HCT116 (cell line): ENCODE measurements at regions of chr10 and their contacts with region 1.

Region 1: GRCh38 chr10:14954001-14954770 is at the start of gene DCLRE1C:
- DNase-seq: peak; percentile 80
- ATAC-seq: peak; percentile 93
- H3K4me3 ChIP-seq: peak within 1 kb of the TSS; percentile 76 to 82
- H3K27ac ChIP-seq: peak within 1 kb of the TSS; percentile 70
- H3K4me1 ChIP-seq: peaks cover 13 to 23% of the 10 kb centered on the region in 2 experiments
- H3K27me3 ChIP-seq: no peaks in the 10 kb centered on the region
- CTCF ChIP-seq: no peak
- POLR2A ChIP-seq: peak; percentile 86
- RAD21 ChIP-seq: no peak
- total RNA-seq, gene DCLRE1C: 14.5 TPM

Region 2: DNA sequence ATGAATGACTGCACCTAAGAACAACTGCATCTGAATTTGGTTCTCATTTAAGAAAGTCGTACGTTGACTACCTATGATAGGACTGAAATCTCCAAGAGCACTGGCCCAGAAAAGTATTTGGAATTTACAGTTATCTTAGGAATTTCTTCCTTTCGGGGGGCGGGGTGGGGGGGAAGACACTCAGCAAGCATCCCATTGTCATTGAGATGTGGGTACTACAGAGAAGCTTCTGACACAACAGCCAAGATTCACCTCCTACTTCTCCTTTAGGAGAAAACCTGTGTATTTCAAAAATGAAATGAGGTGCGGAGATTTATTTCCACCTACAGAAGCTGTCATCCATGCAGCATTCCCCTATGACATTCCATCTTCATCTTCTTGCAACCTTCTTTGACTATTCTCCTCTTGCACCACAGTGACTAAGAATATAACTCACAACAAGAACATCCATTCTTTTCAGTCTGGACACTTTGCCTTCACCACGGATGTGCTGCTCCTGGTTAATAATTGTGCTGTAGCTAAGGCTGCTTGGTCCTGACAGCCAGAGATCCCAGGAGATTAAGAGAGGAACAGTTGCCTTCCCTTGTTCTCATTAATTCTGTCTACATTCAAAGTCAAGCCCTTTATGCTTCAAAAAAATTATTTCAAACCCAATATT is 525.0 kb before region 1 on chr10:
- CTCF ChIA-PET with region 1: no interaction called
- POLR2A ChIA-PET with region 1: no interaction called
- RAD21 ChIA-PET with region 1: no interaction called
- intact Hi-C with region 1: no loop called
- DNase-seq: no peak
- ATAC-seq: no peak
- H3K4me3 ChIP-seq: no peak overlapping the region
- H3K27ac ChIP-seq: no peak overlapping the region
- H3K4me1 ChIP-seq: no peaks in the 10 kb centered on the region
- H3K27me3 ChIP-seq: no peaks in the 10 kb centered on the region; the same call in 1 of the 2 replicates
- CTCF ChIP-seq: no peak
- POLR2A ChIP-seq: no peak
- RAD21 ChIP-seq: no peak

Region 3: GRCh38 chr10:14837757-14838581 is 116.2 kb before region 1 on chr10 and contains the starts of genes CDNF, HSPA14 and MSANTD7:
- CTCF ChIA-PET with region 1: interaction called, 3 read pairs
- POLR2A ChIA-PET with region 1: interaction called, 6 read pairs
- RAD21 ChIA-PET with region 1: no interaction called
- intact Hi-C with region 1: loop called (anchors 5 kb)
- DNase-seq: peak; percentile 98
- ATAC-seq: peak; percentile 94
- H3K4me3 ChIP-seq: peak within 1 kb of the TSS; percentile 84 to 93
- H3K27ac ChIP-seq: peak within 1 kb of the TSS; percentile 83
- H3K4me1 ChIP-seq: peaks cover 2 to 20% of the 10 kb centered on the region in 2 experiments; a peak in 3 of 4 replicates
- H3K27me3 ChIP-seq: no peaks in the 10 kb centered on the region
- CTCF ChIP-seq: no peak
- POLR2A ChIP-seq: peak; percentile 75
- RAD21 ChIP-seq: no peak
- total RNA-seq, gene CDNF: 1.1 TPM
- total RNA-seq, gene HSPA14: 19.9 TPM
- total RNA-seq, gene MSANTD7: 14.3 TPM

Region 4: GRCh38 chr10:14878266-14879054 is 75.7 kb before region 1 on chr10 and contains the start of gene SUV39H2:
- CTCF ChIA-PET with region 1: no interaction called
- POLR2A ChIA-PET with region 1: interaction called, 4 read pairs
- RAD21 ChIA-PET with region 1: no interaction called
- intact Hi-C with region 1: loop called (anchors 2 kb)
- DNase-seq: peak; percentile 80
- ATAC-seq: peak; percentile 88
- H3K4me3 ChIP-seq: peak within 1 kb of the TSS; percentile 76 to 88
- H3K27ac ChIP-seq: peak within 1 kb of the TSS; percentile 97
- H3K4me1 ChIP-seq: peaks cover 9 to 19% of the 10 kb centered on the region in 2 experiments
- H3K27me3 ChIP-seq: no peaks in the 10 kb centered on the region
- CTCF ChIP-seq: no peak
- POLR2A ChIP-seq: peak; percentile 79
- RAD21 ChIP-seq: no peak
- total RNA-seq, gene SUV39H2: 26.6 TPM

Region 5: GRCh38 chr10:15168781-15169554 is 214.8 kb after region 1 on chr10:
- CTCF ChIA-PET with region 1: no interaction called
- POLR2A ChIA-PET with region 1: no interaction called
- RAD21 ChIA-PET with region 1: no interaction called
- intact Hi-C with region 1: loop called (anchors 5 kb)
- DNase-seq: peak; percentile 92
- ATAC-seq: peak; percentile 69
- H3K4me3 ChIP-seq: peak overlapping the region; percentile 4 to 34; a peak in 1 of 4 replicates
- H3K27ac ChIP-seq: no peak overlapping the region; the same call in 1 of the 2 replicates
- H3K4me1 ChIP-seq: peaks cover 18 to 22% of the 10 kb centered on the region in 2 experiments
- H3K27me3 ChIP-seq: no peaks in the 10 kb centered on the region
- CTCF ChIP-seq: no peak
- POLR2A ChIP-seq: no peak
- RAD21 ChIP-seq: no peak

Region 6: DNA sequence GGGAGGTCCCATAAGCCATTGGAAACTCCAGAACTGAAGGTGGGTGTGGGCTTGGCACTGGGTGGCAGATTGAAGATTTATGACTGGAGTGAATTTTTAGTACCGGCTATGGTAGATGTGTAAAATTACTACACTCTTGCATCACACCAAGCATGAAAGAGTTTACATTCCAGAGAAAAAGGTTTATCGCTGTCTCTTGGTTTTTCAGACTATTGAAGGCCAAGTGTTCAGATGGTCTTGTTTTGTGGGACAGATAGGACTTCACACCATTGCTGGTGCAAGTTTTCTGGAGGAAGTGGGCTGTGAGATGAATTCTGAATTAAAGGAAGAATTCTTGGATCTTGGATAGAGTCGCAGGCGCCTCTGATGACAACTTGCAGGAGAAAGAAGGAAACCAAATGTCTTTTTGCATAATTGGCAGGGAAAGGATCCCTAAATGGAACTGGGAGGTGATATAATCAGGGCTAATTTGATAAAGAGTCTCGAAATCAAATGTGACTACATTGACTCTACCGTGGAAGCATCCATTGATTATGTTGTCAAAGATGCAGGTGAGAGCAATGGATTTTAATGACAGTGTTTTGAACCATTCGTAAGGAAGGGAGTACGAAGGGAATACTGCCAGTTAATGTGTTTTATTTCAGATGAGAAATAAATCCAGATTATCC is 228.5 kb after region 1 on chr10:
- CTCF ChIA-PET with region 1: no interaction called
- POLR2A ChIA-PET with region 1: no interaction called
- RAD21 ChIA-PET with region 1: no interaction called
- intact Hi-C with region 1: no loop called
- DNase-seq: no peak
- ATAC-seq: no peak
- H3K4me3 ChIP-seq: no peak overlapping the region
- H3K27ac ChIP-seq: no peak overlapping the region
- H3K4me1 ChIP-seq: no peaks in the 10 kb centered on the region
- H3K27me3 ChIP-seq: no peaks in the 10 kb centered on the region
- CTCF ChIP-seq: no peak
- POLR2A ChIP-seq: no peak
- RAD21 ChIP-seq: no peak